Esophagus muscularis mucosa (tissue), 4 donors: ENCODE measurements at regions of chr21 and their contacts with region 1.

Region 1: GRCh38 chr21:31088315-31088714 is 50.0 kb upstream of the KRTAP19-8 start:
- DNase-seq: peak; percentile 42
- H3K4me3 ChIP-seq: no peak overlapping the region
- H3K27ac ChIP-seq: no peak overlapping the region
- H3K4me1 ChIP-seq: peaks cover 0 to 5% (median 2%) of the 10 kb centered on the region in 4 donors
- H3K27me3 ChIP-seq: peaks cover 0 to 10% (median 0%) of the 10 kb centered on the region in 4 donors
- CTCF ChIP-seq: no peak
- EP300 ChIP-seq: no peak
- POLR2A ChIP-seq: no peak

Region 2: GRCh38 chr21:30044445-30045064 is 1043.8 kb before region 1 on chr21:
- intact Hi-C with region 1: loop called (anchors 10 kb)
- DNase-seq: no peak
- H3K4me3 ChIP-seq: no peak overlapping the region
- H3K27ac ChIP-seq: no peak overlapping the region
- H3K4me1 ChIP-seq: no peaks in the 10 kb centered on the region
- H3K27me3 ChIP-seq: peaks cover 0 to 6% (median 0%) of the 10 kb centered on the region in 4 donors
- CTCF ChIP-seq: peak; percentile 50 to 78 (median 65)
- EP300 ChIP-seq: no peak
- POLR2A ChIP-seq: no peak

Region 3: DNA sequence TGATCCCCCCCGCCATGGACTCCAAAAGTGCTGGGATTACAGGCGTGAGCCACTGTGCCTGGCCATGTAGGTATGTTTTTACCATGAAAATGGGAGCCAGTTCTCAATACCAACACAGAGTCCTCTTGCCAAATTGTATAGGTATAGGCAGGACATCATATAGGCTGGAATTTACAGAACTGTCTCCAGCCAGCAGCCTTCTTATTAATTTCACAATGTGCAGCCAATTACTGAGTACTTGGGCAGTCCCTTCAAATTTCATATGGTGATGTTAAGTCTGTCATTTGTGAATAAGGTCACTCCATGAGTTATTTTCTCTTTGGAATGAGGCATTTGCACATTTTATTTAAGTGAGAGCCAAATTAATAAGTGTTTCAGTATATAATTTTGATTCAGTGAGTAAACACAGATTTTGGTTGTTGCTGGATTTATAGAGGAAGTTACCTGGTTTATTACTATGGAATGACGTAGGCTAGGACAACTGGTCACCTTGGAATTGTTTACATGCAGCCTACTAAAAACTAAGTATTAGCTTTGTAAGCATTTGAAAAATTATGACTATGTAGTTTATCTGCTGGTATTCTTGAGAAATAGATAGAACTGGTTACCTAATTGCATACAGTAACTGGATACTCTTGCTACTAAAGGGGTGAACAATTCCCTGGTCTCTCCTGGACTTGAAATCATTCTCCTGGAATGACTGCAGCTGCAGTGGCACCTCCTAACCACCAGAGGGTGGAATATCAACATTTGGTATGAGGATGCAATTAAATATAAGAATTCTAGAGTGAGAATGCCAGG is 747.7 kb before region 1 on chr21:
- intact Hi-C with region 1: loop called (anchors 5 kb)
- DNase-seq: no peak
- H3K4me3 ChIP-seq: no peak overlapping the region
- H3K27ac ChIP-seq: no peak overlapping the region
- H3K4me1 ChIP-seq: no peaks in the 10 kb centered on the region
- H3K27me3 ChIP-seq: no peaks in the 10 kb centered on the region
- CTCF ChIP-seq: peak; percentile 56 to 81 (median 68)
- EP300 ChIP-seq: no peak
- POLR2A ChIP-seq: no peak